Right cardiac atrium (tissue), 5 donors: ENCODE measurements at regions of chr6 and their contacts with region 1.

Region 1: DNA sequence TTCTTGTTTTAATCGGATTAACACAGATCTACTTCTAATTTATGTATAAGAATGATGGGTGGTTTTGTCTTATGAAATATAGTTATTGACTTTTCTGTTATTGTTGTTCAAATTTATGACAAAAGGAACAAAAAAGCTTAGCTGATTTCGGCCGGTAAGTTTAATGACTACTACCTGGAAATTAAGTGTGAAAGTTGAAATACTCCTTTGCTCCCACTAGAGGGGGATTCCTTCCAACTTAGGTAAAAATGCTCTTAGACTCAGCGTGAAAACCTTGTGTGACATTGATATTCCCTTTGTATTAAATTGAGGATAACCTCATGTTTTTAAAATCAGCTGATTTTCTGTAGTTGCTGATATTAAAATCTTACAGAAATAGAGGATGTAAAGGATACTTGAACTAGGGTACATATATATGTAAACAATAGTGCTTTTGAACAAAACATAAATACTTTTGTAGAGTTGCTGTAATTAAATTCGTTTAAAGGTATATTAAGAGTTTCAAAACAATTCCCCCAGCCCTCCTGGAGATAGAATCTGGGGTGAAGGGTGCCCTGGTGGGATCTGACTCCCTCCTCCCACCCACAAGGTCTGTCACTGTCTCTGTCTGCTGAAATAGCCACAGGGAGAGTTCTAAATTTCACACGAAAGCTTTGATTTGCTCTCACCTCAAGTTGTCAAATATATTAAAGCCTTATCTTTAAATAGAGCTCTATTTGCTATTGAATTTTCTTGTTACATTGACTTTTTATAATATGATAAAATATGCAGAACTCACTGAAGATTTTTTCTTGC is 257.5 kb downstream of the ARID1B start:
- DNase-seq: no peak
- ATAC-seq: peak; percentile 30 to 67
- H3K4me3 ChIP-seq: no peak overlapping the region
- H3K27ac ChIP-seq: no peak overlapping the region
- H3K4me1 ChIP-seq: peaks cover 9% of the 10 kb centered on the region
- H3K27me3 ChIP-seq: no peaks in the 10 kb centered on the region

Region 2: GRCh38 chr6:156379392-156380289 is 655.0 kb before region 1 on chr6:
- intact Hi-C with region 1: no loop called
- DNase-seq: no peak
- ATAC-seq: no peak
- H3K4me3 ChIP-seq: no peak overlapping the region
- H3K27ac ChIP-seq: no peak overlapping the region
- H3K4me1 ChIP-seq: peaks cover 2% of the 10 kb centered on the region
- H3K27me3 ChIP-seq: no peaks in the 10 kb centered on the region

Region 3: DNA sequence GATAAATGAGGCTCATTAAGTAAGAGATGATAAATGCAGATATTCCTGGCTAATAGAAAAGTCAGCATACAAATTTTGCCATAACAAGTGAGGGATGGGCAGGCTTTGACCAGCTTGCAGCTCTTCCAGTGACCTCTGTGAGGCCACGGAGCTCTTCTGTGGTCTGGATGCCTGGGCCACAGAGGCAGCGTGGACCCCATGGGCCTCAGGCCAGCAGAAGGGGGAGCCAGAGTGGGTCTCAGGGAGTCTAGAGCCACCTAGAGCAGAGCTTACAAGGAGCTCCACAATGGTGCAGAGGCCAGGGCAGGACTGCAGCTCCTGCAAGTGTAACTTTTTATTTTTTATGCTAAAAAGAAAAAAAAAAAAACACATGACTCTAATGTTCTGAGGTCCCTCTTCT is 92.4 kb before region 1 on chr6:
- intact Hi-C with region 1: no loop called
- DNase-seq: no peak
- ATAC-seq: peak in 1 of 2 donors; percentile 38
- H3K4me3 ChIP-seq: no peak overlapping the region
- H3K27ac ChIP-seq: no peak overlapping the region
- H3K4me1 ChIP-seq: peaks cover 7% of the 10 kb centered on the region
- H3K27me3 ChIP-seq: no peaks in the 10 kb centered on the region

Region 4: GRCh38 chr6:157184202-157185020 is 149.8 kb after region 1 on chr6:
- intact Hi-C with region 1: loop called in 3 of 4 experiments (anchors 5 to 10 kb)
- DNase-seq: peak; percentile 75 to 91 (median 87)
- ATAC-seq: peak; percentile 82 to 83
- H3K4me3 ChIP-seq: no peak overlapping the region
- H3K27ac ChIP-seq: no peak overlapping the region
- H3K4me1 ChIP-seq: peaks cover 2% of the 10 kb centered on the region
- H3K27me3 ChIP-seq: no peaks in the 10 kb centered on the region